ENCODE measurements at regions of chr14 and their contacts with region 1.

Region 1: GRCh38 chr14:100375963-100376735 is 53.0 kb downstream of the SLC25A47 start:
- DNase-seq: peak; percentile 96
- H3K4me3 ChIP-seq: peak within 1 kb of the TSS; percentile 90 to 94 (median 91)
- H3K27ac ChIP-seq: peak within 1 kb of the TSS; percentile 98
- H3K4me1 ChIP-seq: peaks cover 19% of the 10 kb centered on the region
- H3K27me3 ChIP-seq: no peaks in the 10 kb centered on the region
- CTCF ChIP-seq: no peak

Region 2: GRCh38 chr14:100285021-100285912 is 90.9 kb before region 1 on chr14:
- CTCF ChIA-PET with region 1: no interaction called
- dilution Hi-C with region 1: no loop called
- in situ Hi-C with region 1: no loop called
- intact Hi-C with region 1: loop called (anchors 1 kb)
- DNase-seq: peak; percentile 50
- H3K4me3 ChIP-seq: peak overlapping the region; percentile 68 to 89 (median 74)
- H3K27ac ChIP-seq: peak overlapping the region; percentile 53
- H3K4me1 ChIP-seq: peaks cover 42% of the 10 kb centered on the region
- H3K27me3 ChIP-seq: no peaks in the 10 kb centered on the region
- CTCF ChIP-seq: peak; percentile 53 to 92

Region 3: GRCh38 chr14:100306420-100307219 is 69.5 kb before region 1 on chr14 and contains the start of gene SLC25A29:
- CTCF ChIA-PET with region 1: no interaction called
- dilution Hi-C with region 1: no loop called
- in situ Hi-C with region 1: no loop called
- intact Hi-C with region 1: loop called (anchors 1 kb)
- DNase-seq: peak; percentile 78
- H3K4me3 ChIP-seq: peak within 1 kb of the TSS; percentile 66 to 76 (median 69)
- H3K27ac ChIP-seq: no peak within 1 kb of the TSS
- H3K4me1 ChIP-seq: peaks cover 26% of the 10 kb centered on the region
- H3K27me3 ChIP-seq: no peaks in the 10 kb centered on the region
- CTCF ChIP-seq: no peak
- total RNA-seq, gene SLC25A29: 8.0 to 29.7 TPM

Measured in mammary epithelial cell (primary cell).